T-cell (primary cell): ENCODE measurements at regions of chr21 and their contacts with region 1.

Region 1: GRCh38 chr21:33296156-33296555 is 28.6 kb upstream of the IFNAR1 start:
- DNase-seq: no peak
- ATAC-seq: no peak
- H3K4me3 ChIP-seq: no peak overlapping the region
- H3K4me3 Mint-ChIP-seq: no peak overlapping the region
- H3K27ac ChIP-seq: no peak overlapping the region
- H3K27ac Mint-ChIP-seq: peak overlapping the region; percentile 15 to 55
- H3K4me1 ChIP-seq: peaks cover 27 to 49% of the 10 kb centered on the region in 2 experiments
- H3K4me1 Mint-ChIP-seq: peaks cover 58 to 69% (median 58%) of the 10 kb centered on the region in 3 donors
- H3K27me3 ChIP-seq: no peaks in the 10 kb centered on the region
- H3K27me3 Mint-ChIP-seq: no peaks in the 10 kb centered on the region

Region 2: GRCh38 chr21:33458861-33459260 is 162.7 kb after region 1 on chr21:
- CTCF ChIA-PET with region 1: no interaction called
- POLR2A ChIA-PET with region 1: interaction called in 1 of 2 experiments, 17 read pairs
- DNase-seq: no peak
- ATAC-seq: no peak
- H3K4me3 ChIP-seq: no peak overlapping the region
- H3K4me3 Mint-ChIP-seq: no peak overlapping the region
- H3K27ac ChIP-seq: no peak overlapping the region
- H3K27ac Mint-ChIP-seq: no peak overlapping the region
- H3K4me1 ChIP-seq: no peaks in the 10 kb centered on the region
- H3K4me1 Mint-ChIP-seq: no peaks in the 10 kb centered on the region
- H3K27me3 ChIP-seq: no peaks in the 10 kb centered on the region
- H3K27me3 Mint-ChIP-seq: no peaks in the 10 kb centered on the region